ENCODE measurements at regions of chr20 and their contacts with region 1.

Region 1: DNA sequence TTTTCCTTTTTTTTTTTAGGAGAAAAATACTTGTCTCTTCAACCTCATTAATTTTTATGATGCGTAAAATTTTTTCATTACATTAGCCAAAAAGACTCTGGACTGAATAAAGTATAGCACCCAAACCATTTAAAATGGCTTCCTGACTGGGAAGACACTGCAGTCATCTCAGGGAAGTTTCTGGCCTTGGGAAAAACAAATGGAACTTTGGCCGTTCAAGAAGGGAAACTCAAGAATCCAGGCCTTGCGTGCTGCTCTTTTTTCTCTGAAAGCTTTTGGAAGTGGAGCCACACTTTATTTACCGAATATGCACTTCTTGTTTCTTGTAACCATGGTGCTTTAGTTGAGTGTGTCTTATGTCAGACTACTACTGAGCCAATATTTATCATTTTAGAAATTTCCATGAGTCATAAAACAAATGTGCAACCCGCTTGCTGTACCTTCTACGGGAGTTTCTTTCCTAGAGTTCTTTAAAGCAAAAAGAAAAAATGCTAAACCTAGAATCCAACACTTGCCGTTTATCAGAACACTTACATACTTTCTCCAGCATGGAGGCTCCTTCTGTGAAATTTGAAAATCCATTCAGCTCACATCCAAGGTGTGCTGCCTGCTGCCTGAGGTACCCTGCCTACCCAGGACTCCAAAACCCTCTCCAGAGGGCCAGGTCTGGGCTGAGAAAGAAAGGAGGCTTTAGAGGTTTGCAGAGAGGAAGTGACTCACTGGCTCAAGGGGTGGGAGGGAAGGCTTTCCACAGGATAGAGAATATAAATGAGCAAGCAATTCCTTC is 11.5 kb upstream of the DSTN start:
- DNase-seq: peak; percentile 92 to 93
- ATAC-seq: peak; percentile 92 to 94
- H3K4me3 ChIP-seq: peak overlapping the region; percentile 26
- H3K27ac ChIP-seq: peak overlapping the region; percentile 89 to 96
- H3K4me1 ChIP-seq: peaks cover 62% of the 10 kb centered on the region
- CTCF ChIP-seq: no peak
- EP300 ChIP-seq: peak in 1 of 2 experiments; percentile 65; a peak in 2 of 5 replicates
- POLR2A ChIP-seq: peak; percentile 53
- RAD21 ChIP-seq: no peak; a peak in 4 of 5 replicates

Region 2: DNA sequence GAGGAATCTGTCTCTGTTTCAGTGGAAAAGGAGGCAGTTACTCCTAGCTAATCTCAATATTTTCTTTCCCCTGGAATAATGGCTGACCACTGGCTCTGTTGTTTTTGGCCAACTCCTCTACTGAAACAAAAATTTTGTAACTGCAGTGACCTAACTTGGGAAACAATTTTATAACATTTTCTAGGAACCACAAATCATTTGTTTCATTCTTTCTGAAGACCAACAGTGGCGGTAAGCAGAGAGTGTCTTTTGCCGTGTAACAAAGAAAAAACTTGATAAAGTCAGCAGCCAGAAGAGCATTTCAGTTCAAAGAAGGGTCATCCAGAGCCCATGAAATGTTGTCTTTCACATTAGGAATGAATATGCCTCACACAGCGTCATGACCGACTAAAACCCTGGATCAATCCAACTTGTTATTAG is 15.3 kb before region 1 on chr20:
- CTCF ChIA-PET with region 1: interaction called, 30 read pairs
- POLR2A ChIA-PET with region 1: interaction called, 20 read pairs
- DNase-seq: no peak
- ATAC-seq: no peak
- H3K4me3 ChIP-seq: no peak overlapping the region
- H3K27ac ChIP-seq: 0 out of 6 replicates have a peak overlapping the region, but pooled peaks of 1 of the 2 experiments have one; percentile 1
- H3K4me1 ChIP-seq: peaks cover 25% of the 10 kb centered on the region
- CTCF ChIP-seq: no peak
- EP300 ChIP-seq: no peak
- POLR2A ChIP-seq: no peak
- RAD21 ChIP-seq: no peak

Region 3: DNA sequence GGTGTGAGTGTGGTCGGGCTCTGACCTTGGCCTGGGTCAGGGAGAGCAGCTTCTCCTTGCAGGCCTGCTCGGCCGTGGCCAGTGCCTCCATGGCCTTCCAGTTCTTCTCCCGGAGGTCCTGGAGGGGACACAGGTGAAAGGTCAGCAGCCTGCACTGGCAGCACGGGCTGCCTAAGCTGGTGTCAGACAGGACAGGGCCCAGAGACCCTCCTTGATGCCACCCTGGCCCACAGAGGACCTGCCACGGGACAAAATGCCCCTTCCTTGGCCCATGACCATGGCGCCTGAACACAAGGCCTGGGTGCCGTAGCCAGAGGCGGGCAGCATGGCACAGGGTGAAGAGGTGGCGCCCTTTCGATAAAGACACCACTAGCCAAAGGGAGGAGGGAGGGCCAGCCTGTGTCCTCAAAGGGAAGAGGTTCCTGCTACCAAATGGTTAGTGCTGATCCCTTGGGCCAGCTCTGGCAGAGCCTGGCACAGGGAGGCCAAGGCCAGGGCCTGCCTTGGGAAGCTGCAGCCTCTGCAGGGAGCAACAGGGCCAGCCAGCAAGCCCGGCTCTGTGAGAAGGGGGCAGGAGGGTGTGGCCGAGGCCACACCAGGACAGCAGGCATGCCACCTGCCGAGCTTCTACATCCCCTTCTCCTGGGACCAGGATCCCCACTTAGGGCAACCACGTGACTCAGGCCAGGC is 66.3 kb after region 1 on chr20:
- CTCF ChIA-PET with region 1: no interaction called
- POLR2A ChIA-PET with region 1: no interaction called
- DNase-seq: no peak
- ATAC-seq: no peak
- H3K4me3 ChIP-seq: no peak overlapping the region
- H3K27ac ChIP-seq: no peak overlapping the region
- H3K4me1 ChIP-seq: no peaks in the 10 kb centered on the region
- CTCF ChIP-seq: no peak
- EP300 ChIP-seq: no peak
- POLR2A ChIP-seq: no peak
- RAD21 ChIP-seq: no peak

Measured in A549 (cell line).